ENCODE measurements at regions of chr17 and their contacts with region 1.

Region 1: DNA sequence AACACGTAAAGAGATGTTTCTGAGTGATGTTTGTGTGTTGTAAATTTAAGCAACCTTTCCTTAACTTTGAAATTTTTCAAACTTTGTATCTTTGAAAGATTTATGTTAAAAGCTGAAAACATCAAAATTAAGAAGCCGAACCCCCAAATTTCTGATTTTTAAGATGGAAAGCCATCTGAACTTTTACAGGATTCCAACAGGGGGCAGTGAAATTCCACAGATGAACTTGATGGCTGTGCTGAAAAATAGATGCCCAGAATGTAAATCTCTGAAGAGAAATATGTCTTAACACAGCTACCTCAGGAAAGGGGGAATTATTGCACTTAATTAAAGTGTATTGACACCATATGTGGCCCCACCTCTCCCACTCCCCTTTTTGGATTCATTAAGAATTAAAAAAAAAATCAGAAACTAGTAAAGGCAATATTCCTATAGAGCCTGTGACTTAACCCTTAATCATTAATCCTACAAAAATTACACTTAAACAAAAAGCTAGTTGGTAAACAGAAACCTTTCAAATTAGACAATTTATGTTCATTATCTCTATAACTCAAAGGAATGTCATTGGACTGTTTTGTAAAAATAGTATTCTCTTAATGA is 597.9 kb downstream of the KCNJ2 start:
- DNase-seq: no peak
- H3K4me3 ChIP-seq: no peak overlapping the region
- H3K27ac ChIP-seq: no peak overlapping the region
- H3K4me1 ChIP-seq: no peaks in the 10 kb centered on the region
- H3K27me3 ChIP-seq: peaks cover 0 to 4% (median 0%) of the 10 kb centered on the region in 7 donors
- CTCF ChIP-seq: peak in 9 of 11 experiments; percentile 9 to 56 (median 43)
- POLR2A ChIP-seq: no peak

Region 2: GRCh38 chr17:70604854-70605253 is 162.3 kb before region 1 on chr17:
- intact Hi-C with region 1: no loop called
- DNase-seq: no peak
- H3K4me3 ChIP-seq: no peak overlapping the region
- H3K27ac ChIP-seq: no peak overlapping the region
- H3K4me1 ChIP-seq: no peaks in the 10 kb centered on the region
- H3K27me3 ChIP-seq: no peaks in the 10 kb centered on the region
- CTCF ChIP-seq: no peak
- POLR2A ChIP-seq: no peak

Region 3: GRCh38 chr17:72539981-72540897 is 1773.0 kb after region 1 on chr17:
- intact Hi-C with region 1: loop called (anchors 10 kb)
- DNase-seq: peak; percentile 88
- H3K4me3 ChIP-seq: peak overlapping the region in 1 of 8 donors; percentile 37
- H3K27ac ChIP-seq: no peak overlapping the region
- H3K4me1 ChIP-seq: peaks cover 0 to 9% (median 4%) of the 10 kb centered on the region in 6 donors
- H3K27me3 ChIP-seq: peaks cover 0 to 67% (median 10%) of the 10 kb centered on the region in 7 donors
- CTCF ChIP-seq: peak; percentile 37 to 86 (median 75)
- POLR2A ChIP-seq: no peak

Measured in spleen (tissue), 13 donors.